ENCODE measurements at regions of chr3 and their contacts with region 1.

Region 1: DNA sequence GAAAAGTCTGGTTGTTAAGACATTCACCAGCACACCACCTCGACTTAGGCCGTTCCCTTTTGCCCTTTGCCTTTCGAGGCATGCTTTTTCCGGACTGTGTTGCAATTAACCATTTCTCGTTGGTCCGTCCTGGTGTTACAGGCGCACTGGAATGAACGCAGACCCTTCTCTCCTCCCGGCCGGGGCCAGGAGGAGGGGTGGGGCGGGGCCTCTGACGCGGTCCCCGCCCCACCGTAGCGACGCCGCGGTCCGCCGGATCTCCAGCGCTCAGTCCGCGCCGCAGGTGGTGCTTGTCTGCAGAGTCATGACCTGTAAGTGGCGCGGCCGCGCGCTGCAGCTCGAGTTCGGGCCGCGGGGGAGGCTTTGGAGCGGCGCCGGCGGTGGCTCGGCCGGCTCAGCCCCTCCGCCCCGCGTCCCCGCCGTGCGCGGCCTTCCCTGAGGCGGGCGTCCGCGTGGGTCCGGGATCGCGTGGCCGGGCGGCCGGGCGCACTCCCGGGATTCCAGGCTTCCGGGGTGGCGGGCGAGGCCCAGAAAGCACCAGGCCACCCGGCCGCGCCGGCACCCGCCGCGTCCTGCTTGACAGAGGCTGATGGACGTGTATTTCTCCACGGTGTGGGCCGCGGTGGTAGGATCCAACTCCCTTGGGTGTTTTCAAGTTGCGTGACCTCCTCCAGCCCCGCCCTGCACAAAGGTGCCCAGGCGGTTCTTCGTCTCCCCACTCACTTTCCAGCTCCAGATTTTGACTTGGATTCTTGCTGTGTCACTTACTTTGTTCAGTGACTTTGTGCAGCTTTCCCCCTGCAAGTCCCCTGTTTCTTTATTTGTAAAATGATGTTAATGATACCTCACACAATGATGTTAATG is at the start of gene NIT2:
- DNase-seq: peak; percentile 83
- H3K4me3 Mint-ChIP-seq: peak within 1 kb of the TSS; percentile 88
- H3K27ac Mint-ChIP-seq: peak within 1 kb of the TSS; percentile 84
- H3K4me1 Mint-ChIP-seq: peaks cover 23% of the 10 kb centered on the region
- H3K27me3 Mint-ChIP-seq: no peaks in the 10 kb centered on the region
- total RNA-seq, gene NIT2: 36.8 to 38.8 TPM

Region 2: GRCh38 chr3:100354850-100355249 is 20.1 kb after region 1 on chr3:
- CTCF ChIA-PET with region 1: interaction called, 3 read pairs
- POLR2A ChIA-PET with region 1: interaction called, 11 read pairs
- DNase-seq: no peak
- H3K4me3 Mint-ChIP-seq: no peak overlapping the region
- H3K27ac Mint-ChIP-seq: no peak overlapping the region
- H3K4me1 Mint-ChIP-seq: no peaks in the 10 kb centered on the region
- H3K27me3 Mint-ChIP-seq: no peaks in the 10 kb centered on the region